Common myeloid progenitor, CD34-positive (primary cell): ENCODE measurements at regions of chr15 and their contacts with region 1.

Region 1: DNA sequence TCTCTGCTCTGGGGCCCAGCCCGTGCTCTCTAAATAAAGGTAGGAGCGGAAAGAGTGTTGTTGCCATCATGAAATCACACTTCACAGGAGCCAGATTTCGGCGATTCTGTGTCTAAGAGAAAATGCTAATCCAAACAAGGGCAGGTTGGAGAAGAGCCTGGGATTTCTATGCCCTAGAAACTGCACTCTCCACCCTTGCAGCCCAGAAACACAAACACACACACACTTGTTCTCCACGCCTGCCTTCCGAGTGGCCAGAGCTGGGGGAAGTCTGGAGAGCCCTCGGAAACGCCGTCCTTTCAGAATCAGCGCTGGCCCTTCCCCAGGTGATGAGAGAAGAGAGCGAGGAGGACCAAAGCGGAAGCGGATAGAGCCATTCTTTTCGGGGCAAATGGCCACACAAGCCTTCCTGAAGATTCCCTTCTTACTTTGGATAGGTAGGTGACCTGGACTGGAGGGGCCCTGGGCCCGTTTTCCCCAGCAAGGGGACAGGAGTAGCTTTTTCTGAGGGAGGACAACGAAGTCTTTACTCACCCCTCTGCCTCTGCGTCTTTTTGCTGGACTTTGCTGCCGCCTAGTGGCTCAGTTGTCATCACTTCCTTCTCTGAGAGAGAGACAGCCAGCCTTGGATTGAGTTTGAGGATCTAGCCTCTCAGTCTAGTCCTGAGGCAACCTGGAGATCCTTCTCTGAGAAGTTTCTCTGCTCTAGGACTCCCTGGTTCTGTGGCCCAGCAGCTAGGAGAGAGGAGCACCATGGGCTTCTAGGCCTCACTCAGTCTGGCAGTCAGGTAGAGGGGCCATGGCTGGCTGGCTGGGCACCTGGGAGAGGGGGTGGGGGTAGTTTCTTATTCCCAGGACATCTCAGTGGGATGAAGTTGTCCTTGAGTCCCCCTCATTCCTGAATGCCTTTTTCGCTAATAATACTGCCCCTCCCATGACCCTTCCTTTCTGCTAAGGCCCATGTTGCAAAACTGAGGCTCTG is 37.7 kb downstream of the SENP8 start:
- DNase-seq: peak; percentile 77 to 89 (median 84)
- H3K4me3 ChIP-seq: peak overlapping the region in 6 of 7 experiments; percentile 40 to 85 (median 64)
- H3K27ac ChIP-seq: no peak overlapping the region
- H3K4me1 ChIP-seq: peaks cover 0 to 9% (median 5%) of the 10 kb centered on the region in 4 experiments
- H3K27me3 ChIP-seq: no peaks in the 10 kb centered on the region

Region 2: GRCh38 chr15:71463156-71463665 is 692.7 kb before region 1 on chr15:
- CTCF ChIA-PET with region 1: no interaction called
- POLR2A ChIA-PET with region 1: interaction called, 13 read pairs
- DNase-seq: no peak
- H3K4me3 ChIP-seq: no peak overlapping the region
- H3K27ac ChIP-seq: no peak overlapping the region
- H3K4me1 ChIP-seq: no peaks in the 10 kb centered on the region
- H3K27me3 ChIP-seq: peaks cover 0 to 2% (median 0%) of the 10 kb centered on the region in 5 experiments

Region 3: DNA sequence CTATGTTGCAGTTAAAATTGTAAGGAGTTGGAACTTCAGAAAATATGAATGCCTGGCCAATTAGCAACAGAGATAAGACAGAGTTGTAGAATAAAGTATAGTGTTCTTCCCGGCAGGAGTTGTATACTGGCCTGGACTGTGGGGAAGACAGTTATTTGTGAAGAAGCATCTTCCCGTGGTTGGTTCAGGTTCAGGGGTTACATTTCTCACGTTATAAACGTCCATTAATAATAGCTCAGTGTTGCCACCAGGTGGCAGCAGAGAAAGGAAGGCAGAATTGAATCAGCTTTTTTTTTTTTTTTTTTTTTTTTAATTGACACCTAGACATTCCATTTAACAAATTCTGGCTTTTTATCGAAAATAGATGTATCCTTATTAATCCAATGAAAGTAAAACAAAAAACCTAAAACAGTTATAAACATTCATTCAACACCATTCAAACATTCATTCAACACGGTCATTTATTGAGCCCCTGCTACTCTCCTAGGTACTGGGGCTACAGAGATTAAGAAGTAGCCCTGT is 412.0 kb before region 1 on chr15:
- CTCF ChIA-PET with region 1: interaction called, 11 read pairs
- POLR2A ChIA-PET with region 1: no interaction called
- DNase-seq: peak; percentile 50 to 72 (median 58)
- H3K4me3 ChIP-seq: no peak overlapping the region
- H3K27ac ChIP-seq: no peak overlapping the region
- H3K4me1 ChIP-seq: no peaks in the 10 kb centered on the region
- H3K27me3 ChIP-seq: peaks cover 0 to 3% (median 0%) of the 10 kb centered on the region in 5 experiments

Region 4: GRCh38 chr15:72124218-72124617 is 31.7 kb before region 1 on chr15:
- CTCF ChIA-PET with region 1: no interaction called
- POLR2A ChIA-PET with region 1: no interaction called
- DNase-seq: no peak
- H3K4me3 ChIP-seq: no peak overlapping the region
- H3K27ac ChIP-seq: no peak overlapping the region
- H3K4me1 ChIP-seq: peaks cover 0 to 3% (median under 1%) of the 10 kb centered on the region in 4 experiments
- H3K27me3 ChIP-seq: no peaks in the 10 kb centered on the region